Activated CD4-positive, alpha-beta T cell treated with anti-CD3 and anti-CD28 coated beads for 36 hours (primary cell): ENCODE measurements at regions of chr14 and their contacts with region 1.

Region 1: GRCh38 chr14:100117633-100118395 is 41.6 kb downstream of the DEGS2 start:
- DNase-seq: no peak
- ATAC-seq: peak; percentile 27
- H3K4me3 Mint-ChIP-seq: no peak overlapping the region
- H3K27ac Mint-ChIP-seq: peak overlapping the region; percentile 83
- H3K4me1 Mint-ChIP-seq: peaks cover 34% of the 10 kb centered on the region
- H3K27me3 Mint-ChIP-seq: no peaks in the 10 kb centered on the region

Region 2: DNA sequence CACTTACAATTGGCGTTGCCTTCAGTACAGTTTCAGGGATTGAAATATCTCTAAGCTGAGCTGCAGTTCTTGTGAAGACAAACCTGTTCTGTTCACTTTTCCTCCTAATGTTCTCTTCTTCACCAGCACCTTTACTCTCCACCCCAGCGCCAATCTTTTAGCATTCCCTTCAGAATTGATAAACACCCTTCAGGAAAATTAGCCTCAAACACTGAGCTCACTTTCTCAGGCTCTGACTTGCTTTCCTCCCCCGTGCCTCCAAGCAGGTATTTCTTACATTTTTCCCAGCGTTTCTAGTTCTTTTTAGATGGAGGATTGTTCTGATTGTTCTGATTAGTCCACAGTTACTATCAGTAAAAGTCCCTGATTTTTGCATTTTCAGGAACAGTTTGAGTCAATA is 141.1 kb before region 1 on chr14:
- CTCF ChIA-PET with region 1: interaction called, 13 read pairs
- POLR2A ChIA-PET with region 1: no interaction called
- intact Hi-C with region 1: no loop called
- DNase-seq: no peak
- ATAC-seq: no peak
- H3K4me3 Mint-ChIP-seq: no peak overlapping the region
- H3K27ac Mint-ChIP-seq: no peak overlapping the region
- H3K4me1 Mint-ChIP-seq: peaks cover 19% of the 10 kb centered on the region
- H3K27me3 Mint-ChIP-seq: no peaks in the 10 kb centered on the region